ENCODE measurements at regions of chr3 and their contacts with region 1.

Region 1: GRCh38 chr3:126475413-126476114 is at the start of gene ZXDC:
- DNase-seq: peak; percentile 80 to 97 (median 94)
- ATAC-seq: peak; percentile 75
- H3K4me3 ChIP-seq: peak within 1 kb of the TSS; percentile 74
- H3K4me3 Mint-ChIP-seq: peak within 1 kb of the TSS; percentile 95
- H3K27ac ChIP-seq: peak within 1 kb of the TSS; percentile 23 to 77
- H3K27ac Mint-ChIP-seq: peak within 1 kb of the TSS; percentile 94
- H3K4me1 ChIP-seq: peaks cover 41% of the 10 kb centered on the region
- H3K4me1 Mint-ChIP-seq: peaks cover 51% of the 10 kb centered on the region
- H3K27me3 ChIP-seq: no peaks in the 10 kb centered on the region
- H3K27me3 Mint-ChIP-seq: no peaks in the 10 kb centered on the region
- CTCF ChIP-seq: no peak
- total RNA-seq, gene ZXDC: 60.7 to 61.3 TPM

Region 2: GRCh38 chr3:124722589-124722988 is 1753.0 kb before region 1 on chr3:
- CTCF ChIA-PET with region 1: no interaction called
- POLR2A ChIA-PET with region 1: no interaction called
- intact Hi-C with region 1: loop called in 1 of 2 experiments (anchors 10 kb)
- DNase-seq: no peak
- ATAC-seq: no peak
- H3K4me3 ChIP-seq: no peak overlapping the region
- H3K4me3 Mint-ChIP-seq: no peak overlapping the region
- H3K27ac ChIP-seq: no peak overlapping the region
- H3K27ac Mint-ChIP-seq: no peak overlapping the region
- H3K4me1 ChIP-seq: no peaks in the 10 kb centered on the region
- H3K4me1 Mint-ChIP-seq: no peaks in the 10 kb centered on the region
- H3K27me3 ChIP-seq: peaks cover 17 to 41% of the 10 kb centered on the region in 2 experiments
- H3K27me3 Mint-ChIP-seq: peaks cover 71% of the 10 kb centered on the region
- CTCF ChIP-seq: no peak

Region 3: DNA sequence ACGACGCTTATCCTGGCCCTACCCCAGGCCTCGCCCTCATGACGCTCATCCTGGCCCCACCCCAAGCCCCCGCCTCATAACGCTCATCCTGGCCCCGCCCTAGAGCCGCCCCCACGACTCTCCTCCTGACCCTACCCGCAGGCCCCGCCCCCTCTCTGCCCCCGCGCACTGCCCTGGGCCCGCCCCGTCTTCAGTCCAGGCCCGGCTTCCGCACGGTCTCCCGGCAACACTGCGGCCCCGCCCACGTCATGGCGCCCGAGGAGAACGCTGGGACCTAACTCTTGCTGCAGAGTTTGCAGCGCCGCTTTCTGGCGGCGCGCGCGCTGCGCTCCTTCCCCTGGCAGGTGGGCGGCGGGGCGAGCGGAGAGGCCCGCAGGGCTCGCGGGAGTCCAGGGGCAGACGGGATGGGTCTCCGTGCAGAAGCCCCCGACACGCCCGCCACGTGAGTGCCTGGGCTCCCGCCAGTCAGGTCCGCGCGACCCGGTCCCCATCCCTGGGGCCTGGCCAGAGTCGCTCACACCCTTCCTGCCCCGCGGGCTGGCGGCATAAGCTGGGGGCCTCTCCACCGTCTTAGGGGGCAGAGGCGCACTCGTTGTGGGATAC is 559.1 kb before region 1 on chr3:
- CTCF ChIA-PET with region 1: no interaction called
- POLR2A ChIA-PET with region 1: no interaction called
- intact Hi-C with region 1: loop called (anchors 2 to 5 kb)
- DNase-seq: peak in 12 of 14 experiments; percentile 93 to 98 (median 96)
- ATAC-seq: peak; percentile 89
- H3K4me3 ChIP-seq: peak overlapping the region; percentile 72
- H3K4me3 Mint-ChIP-seq: peak overlapping the region; percentile 91
- H3K27ac ChIP-seq: peak overlapping the region; percentile 50 to 87
- H3K27ac Mint-ChIP-seq: peak overlapping the region; percentile 95
- H3K4me1 ChIP-seq: peaks cover 12% of the 10 kb centered on the region
- H3K4me1 Mint-ChIP-seq: peaks cover 12% of the 10 kb centered on the region
- H3K27me3 ChIP-seq: no peaks in the 10 kb centered on the region
- H3K27me3 Mint-ChIP-seq: no peaks in the 10 kb centered on the region
- CTCF ChIP-seq: no peak

Region 4: GRCh38 chr3:126083913-126084767 is 391.4 kb before region 1 on chr3 and contains the start of gene SLC41A3:
- CTCF ChIA-PET with region 1: interaction called, 3 read pairs
- POLR2A ChIA-PET with region 1: interaction called, 6 read pairs
- intact Hi-C with region 1: loop called in 1 of 2 experiments (anchors 5 kb)
- DNase-seq: peak; percentile 65 to 88 (median 82)
- ATAC-seq: peak; percentile 86
- H3K4me3 ChIP-seq: peak within 1 kb of the TSS; percentile 70
- H3K4me3 Mint-ChIP-seq: peak within 1 kb of the TSS; percentile 93
- H3K27ac ChIP-seq: peak within 1 kb of the TSS; percentile 33 to 72
- H3K27ac Mint-ChIP-seq: peak within 1 kb of the TSS; percentile 85
- H3K4me1 ChIP-seq: peaks cover 28% of the 10 kb centered on the region
- H3K4me1 Mint-ChIP-seq: peaks cover 30% of the 10 kb centered on the region
- H3K27me3 ChIP-seq: no peaks in the 10 kb centered on the region
- H3K27me3 Mint-ChIP-seq: no peaks in the 10 kb centered on the region
- CTCF ChIP-seq: peak; percentile 82
- total RNA-seq, gene SLC41A3: 26.5 to 29.1 TPM

Region 5: DNA sequence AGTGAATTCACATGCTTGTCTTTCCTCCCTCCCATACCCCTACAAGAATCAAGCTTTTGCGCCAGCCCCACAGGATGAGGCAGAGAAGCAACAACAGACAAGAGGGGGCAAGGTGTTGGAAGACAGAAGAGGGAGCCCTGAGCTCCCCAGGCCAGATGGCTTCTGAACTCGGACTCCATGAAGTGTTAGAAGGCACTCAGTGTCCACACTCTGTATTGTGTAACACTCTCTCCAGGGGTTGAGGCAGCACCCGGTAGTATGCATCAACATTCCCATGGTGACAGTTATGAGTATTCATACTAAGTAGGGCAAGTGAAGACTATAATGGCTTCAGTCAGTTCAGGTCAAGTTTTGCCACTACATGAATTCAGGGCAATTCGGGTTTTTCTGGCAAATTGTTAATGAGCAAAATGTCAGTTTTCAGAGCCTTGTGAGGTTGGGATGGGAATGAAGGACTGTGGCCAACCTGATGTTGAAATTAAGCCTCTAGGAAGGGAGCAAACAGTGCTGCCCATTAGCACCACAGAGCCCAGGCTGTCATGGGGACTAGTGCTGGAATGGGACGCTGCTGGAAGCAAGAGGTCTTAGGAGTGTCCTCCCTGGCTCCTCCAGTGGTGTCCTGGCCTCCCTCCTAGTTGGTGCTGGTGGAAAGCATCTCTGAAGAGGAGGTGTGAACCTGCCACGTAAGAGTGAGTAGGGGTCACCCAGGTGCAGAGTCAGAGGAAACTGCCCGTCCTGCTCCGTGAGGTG is 197.8 kb before region 1 on chr3:
- CTCF ChIA-PET with region 1: no interaction called
- POLR2A ChIA-PET with region 1: no interaction called
- intact Hi-C with region 1: no loop called
- DNase-seq: no peak
- ATAC-seq: no peak
- H3K4me3 ChIP-seq: no peak overlapping the region
- H3K4me3 Mint-ChIP-seq: no peak overlapping the region
- H3K27ac ChIP-seq: no peak overlapping the region
- H3K27ac Mint-ChIP-seq: no peak overlapping the region
- H3K4me1 ChIP-seq: no peaks in the 10 kb centered on the region
- H3K4me1 Mint-ChIP-seq: no peaks in the 10 kb centered on the region
- H3K27me3 ChIP-seq: peaks cover 13 to 14% of the 10 kb centered on the region in 2 experiments
- H3K27me3 Mint-ChIP-seq: peaks cover 41% of the 10 kb centered on the region
- CTCF ChIP-seq: no peak

Region 6: DNA sequence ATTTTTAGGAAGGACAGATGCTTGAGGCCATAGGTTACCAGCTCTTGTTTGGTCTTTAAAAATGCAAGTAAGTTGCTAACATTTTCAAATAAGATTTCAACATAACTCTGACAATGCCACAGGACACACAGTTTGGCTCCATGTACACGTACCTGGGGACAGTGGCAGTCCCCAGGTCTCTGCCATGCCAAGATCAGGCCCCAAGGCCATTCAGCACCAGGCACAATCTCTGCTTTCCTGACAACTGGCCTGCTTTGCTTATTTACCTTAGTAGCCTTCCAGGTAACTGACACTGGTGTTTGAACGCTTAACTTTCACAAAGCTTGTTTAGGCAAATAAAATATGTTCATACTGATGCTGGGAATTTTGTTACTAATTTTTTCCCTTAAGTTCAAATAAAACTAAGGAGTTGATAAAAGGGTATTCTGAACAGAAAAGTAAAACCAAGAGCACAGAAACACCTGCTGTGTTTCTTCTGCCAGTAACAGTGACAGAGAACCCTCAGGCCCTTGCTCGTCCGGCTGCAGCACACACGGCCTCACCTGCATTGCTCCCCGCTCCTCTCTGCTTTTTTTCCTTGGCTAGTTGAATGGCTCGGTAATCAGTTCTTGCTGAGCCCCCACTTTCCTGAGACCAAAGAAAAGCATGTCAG is 16.3 kb before region 1 on chr3:
- CTCF ChIA-PET with region 1: no interaction called
- POLR2A ChIA-PET with region 1: no interaction called
- intact Hi-C with region 1: no loop called
- DNase-seq: no peak
- ATAC-seq: no peak
- H3K4me3 ChIP-seq: no peak overlapping the region
- H3K4me3 Mint-ChIP-seq: no peak overlapping the region
- H3K27ac ChIP-seq: no peak overlapping the region
- H3K27ac Mint-ChIP-seq: no peak overlapping the region
- H3K4me1 ChIP-seq: peaks cover 2% of the 10 kb centered on the region
- H3K4me1 Mint-ChIP-seq: peaks cover 21% of the 10 kb centered on the region
- H3K27me3 ChIP-seq: no peaks in the 10 kb centered on the region
- H3K27me3 Mint-ChIP-seq: no peaks in the 10 kb centered on the region
- CTCF ChIP-seq: no peak

Region 7: DNA sequence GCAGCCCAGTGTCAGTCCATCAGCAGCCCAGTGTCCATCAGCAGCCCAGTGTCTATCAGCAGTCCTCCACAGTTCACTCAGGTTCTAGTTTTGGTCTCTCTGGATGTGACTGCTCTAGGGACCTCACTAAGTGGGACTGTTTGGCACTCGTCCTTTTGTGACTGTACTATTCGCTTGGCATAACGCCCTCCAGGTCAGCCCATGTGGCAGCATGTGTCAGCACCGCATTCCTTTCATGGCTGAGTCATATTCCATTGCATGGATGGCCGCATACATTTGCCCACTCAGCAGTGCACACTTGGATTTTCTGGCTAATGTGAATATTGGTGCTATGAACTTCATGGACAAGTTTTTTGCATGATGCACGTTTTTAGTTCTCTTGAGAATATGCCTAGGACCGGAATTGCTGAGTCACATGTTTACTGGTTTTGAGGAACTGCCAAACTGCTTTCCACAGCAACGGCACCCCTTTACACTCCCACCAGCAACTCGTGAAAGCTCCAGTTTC is 64.8 kb after region 1 on chr3:
- CTCF ChIA-PET with region 1: no interaction called
- POLR2A ChIA-PET with region 1: no interaction called
- intact Hi-C with region 1: no loop called
- DNase-seq: peak in 3 of 14 experiments; percentile 2 to 62 (median 24)
- ATAC-seq: no peak
- H3K4me3 ChIP-seq: no peak overlapping the region
- H3K4me3 Mint-ChIP-seq: no peak overlapping the region
- H3K27ac ChIP-seq: no peak overlapping the region
- H3K27ac Mint-ChIP-seq: no peak overlapping the region
- H3K4me1 ChIP-seq: no peaks in the 10 kb centered on the region
- H3K4me1 Mint-ChIP-seq: no peaks in the 10 kb centered on the region
- H3K27me3 ChIP-seq: no peaks in the 10 kb centered on the region
- H3K27me3 Mint-ChIP-seq: no peaks in the 10 kb centered on the region
- CTCF ChIP-seq: no peak

Region 8: DNA sequence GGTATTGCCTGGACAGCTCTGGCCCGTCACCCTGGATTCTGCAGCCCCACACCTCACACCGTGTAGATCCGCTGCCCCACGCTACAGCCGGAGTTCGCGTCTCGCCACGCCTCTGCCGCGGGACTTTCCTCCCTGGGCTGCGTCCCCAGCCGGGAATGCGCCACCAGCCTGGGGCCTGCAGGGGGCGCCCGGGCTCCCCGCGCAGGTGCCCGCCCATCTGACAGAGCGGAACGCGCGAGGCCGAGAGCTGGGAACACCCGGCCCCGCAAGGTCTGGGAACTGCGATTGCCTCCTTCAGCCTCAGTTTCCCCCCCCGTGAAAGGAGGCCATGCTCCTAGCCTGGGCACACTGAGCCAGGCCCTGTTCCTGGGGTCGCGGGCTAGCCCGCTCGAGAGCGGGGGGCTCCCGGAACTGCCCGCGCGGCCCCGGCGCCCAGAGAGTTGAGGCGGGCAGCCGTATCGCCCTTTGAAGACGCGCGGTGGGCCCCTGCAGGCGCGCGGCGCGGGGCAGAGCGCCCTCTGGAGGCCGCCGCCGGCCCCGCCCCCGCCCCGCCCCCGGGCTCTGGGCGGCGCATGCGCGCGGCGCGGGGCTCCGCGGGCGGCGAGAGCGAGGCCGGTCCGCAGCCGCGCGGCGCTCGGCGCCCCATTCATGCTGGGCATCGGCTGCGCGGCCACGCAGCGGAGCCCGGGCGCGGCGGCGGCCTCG is 507.1 kb after region 1 on chr3 and contains the start of gene PLXNA1:
- CTCF ChIA-PET with region 1: no interaction called
- POLR2A ChIA-PET with region 1: interaction called, 3 read pairs
- intact Hi-C with region 1: loop called in 1 of 2 experiments (anchors 2 kb)
- DNase-seq: peak; percentile 76 to 95 (median 85)
- ATAC-seq: peak; percentile 82
- H3K4me3 ChIP-seq: peak within 1 kb of the TSS; percentile 67
- H3K4me3 Mint-ChIP-seq: peak within 1 kb of the TSS; percentile 89
- H3K27ac ChIP-seq: peak within 1 kb of the TSS; percentile 88 to 90
- H3K27ac Mint-ChIP-seq: peak within 1 kb of the TSS; percentile 93
- H3K4me1 ChIP-seq: peaks cover 30% of the 10 kb centered on the region
- H3K4me1 Mint-ChIP-seq: peaks cover 15% of the 10 kb centered on the region
- H3K27me3 ChIP-seq: peaks cover 0 to 5% of the 10 kb centered on the region in 2 experiments
- H3K27me3 Mint-ChIP-seq: peaks cover 10% of the 10 kb centered on the region
- CTCF ChIP-seq: peak; percentile 99
- total RNA-seq, gene PLXNA1: 9.8 to 10.6 TPM

Region 9: GRCh38 chr3:128153156-128154041 is 1677.8 kb after region 1 on chr3 and contains the start of gene EEFSEC:
- CTCF ChIA-PET with region 1: no interaction called
- POLR2A ChIA-PET with region 1: no interaction called
- intact Hi-C with region 1: loop called in 1 of 2 experiments (anchors 10 kb)
- DNase-seq: peak; percentile 72 to 90 (median 82)
- ATAC-seq: peak; percentile 87
- H3K4me3 ChIP-seq: peak within 1 kb of the TSS; percentile 58
- H3K4me3 Mint-ChIP-seq: peak within 1 kb of the TSS; percentile 87
- H3K27ac ChIP-seq: peak within 1 kb of the TSS; percentile 56 to 80
- H3K27ac Mint-ChIP-seq: peak within 1 kb of the TSS; percentile 84
- H3K4me1 ChIP-seq: peaks cover 22% of the 10 kb centered on the region
- H3K4me1 Mint-ChIP-seq: peaks cover 40% of the 10 kb centered on the region
- H3K27me3 ChIP-seq: no peaks in the 10 kb centered on the region
- H3K27me3 Mint-ChIP-seq: no peaks in the 10 kb centered on the region
- CTCF ChIP-seq: no peak
- total RNA-seq, gene EEFSEC: 13.1 to 13.9 TPM